ENCODE measurements at regions of chr3 and their contacts with region 1.

Region 1: GRCh38 chr3:61251174-61251972 is at the start of gene FHIT:
- DNase-seq: peak; percentile 90
- H3K4me3 Mint-ChIP-seq: peak within 1 kb of the TSS; percentile 96
- H3K27ac Mint-ChIP-seq: peak within 1 kb of the TSS; percentile 94
- H3K4me1 Mint-ChIP-seq: peaks cover 30% of the 10 kb centered on the region
- H3K27me3 Mint-ChIP-seq: peaks cover 12% of the 10 kb centered on the region
- total RNA-seq, gene FHIT: 19.9 and 22.6 TPM in 2 replicates

Region 2: DNA sequence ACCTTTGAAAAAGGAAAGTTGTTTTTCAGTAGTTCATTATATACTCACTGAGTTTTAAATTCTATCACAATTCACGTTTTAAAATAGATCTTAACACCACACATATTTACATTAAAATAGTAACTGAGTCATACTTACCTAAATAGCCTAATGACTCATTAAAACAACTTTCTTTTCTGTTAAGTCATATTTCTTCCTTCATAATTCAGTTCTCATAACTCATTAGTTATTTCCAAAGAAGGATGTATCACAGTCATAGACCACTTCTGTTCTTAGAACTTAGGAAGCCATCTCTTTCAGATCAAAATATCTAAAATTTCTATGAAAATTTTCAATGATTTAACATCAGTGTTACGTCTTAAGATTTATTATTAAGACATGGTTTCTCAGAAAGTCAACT is 886.0 kb before region 1 on chr3:
- intact Hi-C with region 1: loop called (anchors 1 kb)
- DNase-seq: no peak
- H3K4me3 Mint-ChIP-seq: no peak overlapping the region
- H3K27ac Mint-ChIP-seq: peak overlapping the region; percentile 46
- H3K4me1 Mint-ChIP-seq: peaks cover 27% of the 10 kb centered on the region
- H3K27me3 Mint-ChIP-seq: no peaks in the 10 kb centered on the region

Region 3: GRCh38 chr3:60555684-60556354 is 695.6 kb before region 1 on chr3:
- intact Hi-C with region 1: loop called (anchors 1 kb)
- DNase-seq: no peak
- H3K4me3 Mint-ChIP-seq: no peak overlapping the region
- H3K27ac Mint-ChIP-seq: peak overlapping the region; percentile 0
- H3K4me1 Mint-ChIP-seq: peaks cover 38% of the 10 kb centered on the region
- H3K27me3 Mint-ChIP-seq: peaks cover 2% of the 10 kb centered on the region

Region 4: GRCh38 chr3:61371123-61371522 is 119.8 kb after region 1 on chr3:
- intact Hi-C with region 1: loop called (anchors 5 kb)
- DNase-seq: no peak
- H3K4me3 Mint-ChIP-seq: no peak overlapping the region
- H3K27ac Mint-ChIP-seq: no peak overlapping the region
- H3K4me1 Mint-ChIP-seq: no peaks in the 10 kb centered on the region
- H3K27me3 Mint-ChIP-seq: peaks cover 2% of the 10 kb centered on the region

Region 5: DNA sequence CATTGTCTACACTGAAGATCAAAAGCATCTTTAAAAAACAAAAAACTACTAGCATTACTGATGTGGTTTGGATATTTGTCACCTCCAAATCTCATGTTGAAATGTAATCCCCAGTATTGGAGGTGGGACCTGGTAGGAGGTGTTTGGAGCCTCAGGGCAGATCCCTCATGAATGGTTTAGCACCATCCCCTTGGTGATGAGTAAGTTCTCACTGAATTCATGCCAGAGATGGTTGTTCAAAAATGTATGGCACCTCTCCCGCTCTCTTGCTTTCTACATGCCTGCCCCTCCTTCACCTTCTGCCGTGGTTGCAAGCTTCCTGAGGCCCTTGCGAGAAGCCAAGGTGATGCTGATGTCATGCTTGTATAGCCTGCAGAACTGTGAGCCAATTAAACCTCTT is 136.4 kb after region 1 on chr3:
- intact Hi-C with region 1: no loop called
- DNase-seq: no peak
- H3K4me3 Mint-ChIP-seq: no peak overlapping the region
- H3K27ac Mint-ChIP-seq: no peak overlapping the region
- H3K4me1 Mint-ChIP-seq: no peaks in the 10 kb centered on the region
- H3K27me3 Mint-ChIP-seq: peaks cover 2% of the 10 kb centered on the region

Region 6: DNA sequence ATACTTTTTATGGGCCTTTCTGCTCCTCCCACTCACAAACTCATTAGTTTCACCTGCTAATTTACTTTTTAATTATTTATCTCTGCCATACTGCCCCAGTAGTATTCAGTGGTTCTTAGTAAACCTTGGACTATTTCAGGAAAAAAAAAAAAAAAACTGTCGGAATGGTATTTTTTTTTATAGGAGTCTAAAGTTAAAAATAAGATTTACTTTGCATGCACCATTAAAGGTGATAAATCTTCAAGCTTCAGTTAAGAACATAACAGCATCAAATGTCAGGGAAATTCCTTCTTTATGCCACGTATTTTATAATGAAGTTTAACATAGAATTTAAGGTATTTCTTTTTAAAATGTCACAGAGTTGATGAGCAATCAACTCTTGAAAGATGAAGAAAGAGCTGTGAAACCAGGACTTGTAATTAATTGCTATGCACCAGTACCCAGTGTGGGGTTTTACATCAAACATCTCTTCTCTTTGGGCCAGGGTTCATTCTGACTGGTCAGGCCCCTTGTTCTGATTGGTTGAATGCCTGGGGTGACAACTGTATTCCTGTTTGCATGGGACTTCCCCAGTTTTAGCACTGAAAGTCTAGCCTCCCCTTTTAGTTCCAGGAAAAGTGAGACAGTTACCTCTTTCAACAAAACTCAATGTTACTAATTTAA is 269.7 kb after region 1 on chr3:
- intact Hi-C with region 1: loop called (anchors 2 kb)
- DNase-seq: peak; percentile 61
- H3K4me3 Mint-ChIP-seq: peak overlapping the region; percentile 57
- H3K27ac Mint-ChIP-seq: peak overlapping the region; percentile 78
- H3K4me1 Mint-ChIP-seq: peaks cover 57% of the 10 kb centered on the region
- H3K27me3 Mint-ChIP-seq: no peaks in the 10 kb centered on the region

Region 7: DNA sequence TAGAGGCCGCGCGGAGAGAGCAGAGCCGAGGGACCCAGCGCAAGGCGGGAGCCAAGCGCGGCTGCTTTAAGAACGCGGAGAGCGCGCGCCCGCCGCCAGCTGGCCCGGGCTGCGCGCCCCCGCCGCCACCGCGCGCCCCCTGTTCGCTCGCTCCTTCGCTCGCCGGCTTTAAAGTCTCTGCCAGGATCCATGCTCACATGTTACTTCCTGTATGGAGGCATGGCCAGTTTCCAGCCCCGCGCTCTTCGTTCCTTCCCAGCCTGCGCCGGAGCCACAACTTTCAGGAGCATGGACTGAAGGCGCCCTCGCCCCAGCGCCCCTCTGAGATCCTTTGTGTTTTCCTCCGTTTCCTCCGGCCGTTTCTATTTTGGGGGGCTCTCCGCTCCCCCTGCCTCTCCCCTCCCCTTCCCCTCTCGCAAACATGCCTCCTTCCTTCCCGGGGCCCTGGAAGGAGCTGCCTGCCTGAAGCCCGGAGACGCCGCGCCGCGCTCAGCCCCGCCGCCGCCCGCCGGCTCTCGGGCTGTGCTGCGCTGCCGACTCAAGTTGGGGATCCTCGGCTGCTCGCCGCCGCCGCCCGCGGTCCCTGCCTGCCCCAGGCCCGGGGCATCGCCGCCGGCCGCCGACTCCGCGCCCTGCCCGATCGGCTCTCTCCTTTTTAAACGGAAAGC is 310.1 kb after region 1 on chr3 and contains the start of gene PTPRG:
- intact Hi-C with region 1: loop called (anchors 1 kb)
- DNase-seq: peak; percentile 37
- H3K4me3 Mint-ChIP-seq: peak within 1 kb of the TSS; percentile 93
- H3K27ac Mint-ChIP-seq: peak within 1 kb of the TSS; percentile 74
- H3K4me1 Mint-ChIP-seq: peaks cover 12% of the 10 kb centered on the region
- H3K27me3 Mint-ChIP-seq: peaks cover 57% of the 10 kb centered on the region
- total RNA-seq, gene PTPRG: 3.7 and 4.4 TPM in 2 replicates

Region 8: DNA sequence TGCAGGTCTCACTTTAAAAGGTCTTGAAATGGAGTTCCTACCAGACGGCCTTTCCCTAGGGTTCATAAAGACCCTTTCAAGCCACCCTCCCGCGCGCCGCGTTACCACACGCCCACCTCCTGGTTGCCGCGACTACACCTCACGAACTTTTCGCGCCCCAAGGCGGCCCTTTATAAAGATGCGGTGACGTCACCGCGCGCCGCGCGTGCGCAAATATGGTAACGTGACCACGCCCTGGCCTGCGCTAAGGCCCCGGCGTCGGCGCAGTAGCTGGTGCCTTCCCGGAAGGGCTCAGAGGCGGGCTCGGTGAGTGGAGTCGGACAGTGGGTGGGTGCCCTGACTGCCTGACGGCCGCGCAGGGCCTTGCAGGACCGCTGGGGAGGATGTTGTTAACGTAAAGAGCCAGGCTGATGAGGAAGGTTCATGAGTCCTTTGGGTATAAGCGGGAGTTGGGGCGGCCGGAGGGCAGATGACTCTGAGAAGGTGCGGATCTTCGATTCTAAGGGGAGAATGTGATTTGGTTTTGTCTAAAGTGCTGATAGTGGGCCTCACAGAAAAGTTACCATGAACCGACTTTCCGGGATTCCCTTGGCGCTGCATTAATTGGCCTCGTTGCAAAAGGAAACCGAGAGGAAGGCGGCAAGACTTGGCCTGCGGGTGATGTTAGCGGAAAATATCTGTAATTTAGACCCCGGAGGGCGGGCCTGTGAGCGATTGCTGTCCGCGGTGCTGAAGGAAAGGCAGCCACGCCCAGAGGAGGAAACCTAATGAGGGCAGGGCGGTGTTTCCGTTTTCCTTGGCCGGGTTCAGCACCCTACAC is 1067.6 kb after region 1 on chr3:
- intact Hi-C with region 1: loop called (anchors 2 kb)
- DNase-seq: peak; percentile 38
- H3K4me3 Mint-ChIP-seq: peak overlapping the region; percentile 95
- H3K27ac Mint-ChIP-seq: peak overlapping the region; percentile 99
- H3K4me1 Mint-ChIP-seq: peaks cover 9% of the 10 kb centered on the region
- H3K27me3 Mint-ChIP-seq: peaks cover 10% of the 10 kb centered on the region